ENCODE measurements at regions of chr6 and their contacts with region 1.

Region 1: GRCh38 chr6:85678602-85679444 is 36.1 kb upstream of the SYNCRIP start:
- DNase-seq: peak; percentile 96
- ATAC-seq: peak; percentile 80
- H3K4me3 ChIP-seq: peak overlapping the region; percentile 92 to 97 (median 93)
- H3K27ac ChIP-seq: peak overlapping the region; percentile 97
- H3K4me1 ChIP-seq: peaks cover 34% of the 10 kb centered on the region
- H3K27me3 ChIP-seq: no peaks in the 10 kb centered on the region; a peak in 1 of 5 replicates
- CTCF ChIP-seq: 0 out of 2 replicates have a peak, but pooled peaks have one; percentile 14
- EP300 ChIP-seq: peak in 1 of 2 experiments; percentile 19; a peak in 2 of 4 replicates
- POLR2A ChIP-seq: peak; percentile 100
- RAD21 ChIP-seq: peak; percentile 63

Region 2: DNA sequence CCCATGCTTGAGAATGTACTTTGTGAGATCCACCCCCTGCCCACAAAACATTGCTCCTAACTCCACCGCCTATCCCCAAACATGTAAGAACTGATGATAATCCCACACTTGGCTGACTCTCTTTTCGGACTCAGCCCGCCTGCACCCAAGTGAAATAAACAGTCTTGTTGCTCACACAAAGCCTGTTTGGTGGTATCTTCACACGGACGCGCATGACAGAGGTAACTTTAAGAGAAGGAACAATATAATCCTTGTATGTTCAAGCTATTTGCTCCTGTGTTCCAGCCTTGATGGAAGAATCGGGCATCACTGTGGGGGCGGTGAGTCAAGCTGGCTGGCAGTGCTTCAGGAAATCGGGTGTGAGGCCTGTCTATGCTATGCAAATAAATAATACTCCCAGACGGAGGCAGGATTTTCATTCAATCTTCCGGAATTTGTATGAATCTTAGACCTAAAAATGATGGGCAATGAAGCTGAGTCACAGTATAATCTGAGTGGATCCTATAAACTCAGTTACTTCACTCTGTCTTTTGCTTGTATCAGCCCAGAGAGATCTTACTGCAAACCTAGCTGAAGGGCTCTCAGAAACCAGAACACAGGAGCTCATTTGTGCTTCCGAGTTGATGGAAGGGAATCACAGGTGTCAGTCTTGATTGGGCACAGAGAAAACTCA is 274.2 kb before region 1 on chr6:
- CTCF ChIA-PET with region 1: no interaction called
- POLR2A ChIA-PET with region 1: interaction called, 10 read pairs
- in situ Hi-C with region 1: no loop called
- intact Hi-C with region 1: no loop called
- DNase-seq: peak; percentile 82
- ATAC-seq: peak; percentile 63
- H3K4me3 ChIP-seq: peak overlapping the region; percentile 45 to 55 (median 50)
- H3K27ac ChIP-seq: peak overlapping the region; percentile 98
- H3K4me1 ChIP-seq: peaks cover 98% of the 10 kb centered on the region
- H3K27me3 ChIP-seq: no peaks in the 10 kb centered on the region
- CTCF ChIP-seq: no peak
- EP300 ChIP-seq: peak in 1 of 2 experiments; percentile 57; a peak in 2 of 4 replicates
- POLR2A ChIP-seq: 0 out of 4 replicates have a peak, but pooled peaks of 1 of the 2 experiments have one; percentile 28
- RAD21 ChIP-seq: no peak

Region 3: DNA sequence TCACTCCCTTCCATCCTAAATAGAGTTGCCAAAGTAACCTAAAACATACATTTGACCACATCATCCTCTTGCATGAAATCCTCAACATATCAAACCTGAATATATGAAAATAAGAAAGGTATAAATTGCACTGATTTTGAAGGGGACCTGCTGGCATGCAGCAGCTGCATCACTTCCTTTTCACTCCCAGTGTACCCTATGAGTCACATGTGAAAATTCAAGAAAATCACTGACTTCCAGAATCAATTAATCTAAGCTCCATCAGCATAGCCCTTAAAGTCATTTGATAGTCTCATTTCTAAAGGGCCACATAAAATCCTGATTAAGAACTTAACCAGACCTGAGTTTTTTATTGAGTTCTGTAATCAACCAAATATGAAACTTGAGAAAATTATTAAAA is 109.5 kb before region 1 on chr6:
- CTCF ChIA-PET with region 1: no interaction called
- POLR2A ChIA-PET with region 1: no interaction called
- in situ Hi-C with region 1: no loop called
- intact Hi-C with region 1: no loop called
- DNase-seq: no peak
- ATAC-seq: no peak
- H3K4me3 ChIP-seq: no peak overlapping the region
- H3K27ac ChIP-seq: no peak overlapping the region
- H3K4me1 ChIP-seq: no peaks in the 10 kb centered on the region
- H3K27me3 ChIP-seq: no peaks in the 10 kb centered on the region
- CTCF ChIP-seq: no peak
- EP300 ChIP-seq: no peak
- POLR2A ChIP-seq: no peak
- RAD21 ChIP-seq: no peak

Region 4: GRCh38 chr6:85580882-85581267 is 97.9 kb before region 1 on chr6:
- CTCF ChIA-PET with region 1: no interaction called
- POLR2A ChIA-PET with region 1: interaction called, 10 read pairs
- in situ Hi-C with region 1: no loop called
- intact Hi-C with region 1: no loop called
- DNase-seq: peak; percentile 54
- ATAC-seq: peak; percentile 90
- H3K4me3 ChIP-seq: peak overlapping the region in 1 of 3 experiments; percentile 15; a peak in 1 of 6 replicates
- H3K27ac ChIP-seq: peak overlapping the region; percentile 45
- H3K4me1 ChIP-seq: peaks cover 43% of the 10 kb centered on the region
- H3K27me3 ChIP-seq: no peaks in the 10 kb centered on the region
- CTCF ChIP-seq: no peak
- EP300 ChIP-seq: no peak
- POLR2A ChIP-seq: no peak
- RAD21 ChIP-seq: 0 out of 2 replicates have a peak, but pooled peaks have one; percentile 8

Region 5: DNA sequence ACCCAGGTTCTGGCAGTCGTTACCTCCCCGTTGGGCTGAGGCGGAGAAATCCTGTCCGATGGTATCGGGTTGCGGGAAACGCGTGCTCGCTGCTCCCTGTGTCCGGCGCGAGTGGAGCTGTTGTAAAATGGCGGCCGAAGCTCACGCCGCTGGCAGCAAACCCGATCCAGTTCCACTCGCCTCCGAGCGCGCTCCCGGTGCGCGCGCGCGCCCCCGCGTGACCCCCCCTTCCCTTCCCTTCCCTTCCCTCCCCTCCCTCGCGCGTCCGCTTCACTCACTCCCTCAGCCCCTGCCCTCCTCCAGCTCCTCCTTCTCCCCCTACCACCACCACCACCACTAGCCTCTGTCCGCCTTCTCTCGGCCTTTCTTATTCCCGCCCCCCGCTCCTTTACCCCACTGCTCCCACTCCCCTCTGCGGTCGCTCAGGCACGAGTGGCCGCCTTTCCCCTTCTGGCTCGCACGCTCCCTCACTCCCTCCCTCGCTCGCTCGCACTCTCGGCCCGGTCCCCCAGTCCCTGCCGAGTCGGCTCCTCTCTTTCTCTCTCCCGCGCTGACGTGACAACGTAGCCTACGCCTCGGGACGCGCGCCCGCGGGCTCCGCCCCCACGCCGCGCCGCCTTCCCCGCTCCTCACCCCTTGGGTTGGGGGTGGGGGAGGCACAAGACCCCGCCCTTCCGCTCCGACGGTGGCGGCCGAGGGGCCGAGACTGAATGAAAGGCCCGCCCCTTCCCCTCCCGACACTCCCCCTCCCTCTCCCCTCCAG is 35.9 kb before region 1 on chr6 and contains the start of gene SYNCRIP:
- CTCF ChIA-PET with region 1: no interaction called
- POLR2A ChIA-PET with region 1: interaction called, 245 read pairs
- in situ Hi-C with region 1: loop called (anchors 5 kb)
- intact Hi-C with region 1: loop called (anchors 1 kb)
- DNase-seq: peak; percentile 95
- ATAC-seq: peak; percentile 83
- H3K4me3 ChIP-seq: peak within 1 kb of the TSS; percentile 78 to 96 (median 96)
- H3K27ac ChIP-seq: peak within 1 kb of the TSS; percentile 99
- H3K4me1 ChIP-seq: peaks cover 38% of the 10 kb centered on the region
- H3K27me3 ChIP-seq: no peaks in the 10 kb centered on the region; a peak in 1 of 5 replicates
- CTCF ChIP-seq: peak; percentile 17; the same call in 1 of the 2 replicates
- EP300 ChIP-seq: peak in 1 of 2 experiments; percentile 30; a peak in 1 of 4 replicates
- POLR2A ChIP-seq: peak; percentile 79 to 97
- RAD21 ChIP-seq: no peak
- total RNA-seq, gene SYNCRIP: 112 and 183 TPM in 2 replicates

Region 6: DNA sequence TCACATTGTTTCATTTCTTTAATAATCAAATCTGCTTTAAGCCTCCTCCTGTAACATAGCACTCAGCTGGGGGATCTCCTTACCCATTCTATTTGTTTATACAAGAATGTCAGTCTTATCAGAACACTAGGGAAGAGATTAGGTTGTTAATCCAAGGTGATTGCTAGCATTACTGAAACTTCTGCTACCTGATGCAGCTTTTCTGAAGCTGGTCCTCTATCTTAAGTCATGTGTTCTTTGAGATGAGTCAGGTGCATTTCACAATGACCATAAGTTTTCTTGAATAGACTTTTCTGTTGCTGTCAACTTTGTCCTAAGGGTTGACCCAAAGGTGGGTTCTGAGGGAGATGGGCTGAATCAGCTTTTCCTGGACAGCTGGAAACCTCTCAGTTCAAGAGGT is 24.6 kb after region 1 on chr6:
- CTCF ChIA-PET with region 1: no interaction called
- POLR2A ChIA-PET with region 1: interaction called, 13 read pairs
- in situ Hi-C with region 1: no loop called
- intact Hi-C with region 1: no loop called
- DNase-seq: no peak
- ATAC-seq: no peak
- H3K4me3 ChIP-seq: no peak overlapping the region
- H3K27ac ChIP-seq: no peak overlapping the region
- H3K4me1 ChIP-seq: no peaks in the 10 kb centered on the region
- H3K27me3 ChIP-seq: no peaks in the 10 kb centered on the region
- CTCF ChIP-seq: no peak
- EP300 ChIP-seq: no peak
- POLR2A ChIP-seq: no peak
- RAD21 ChIP-seq: no peak